ENCODE measurements at regions of chr19 and their contacts with region 1.

Region 1: DNA sequence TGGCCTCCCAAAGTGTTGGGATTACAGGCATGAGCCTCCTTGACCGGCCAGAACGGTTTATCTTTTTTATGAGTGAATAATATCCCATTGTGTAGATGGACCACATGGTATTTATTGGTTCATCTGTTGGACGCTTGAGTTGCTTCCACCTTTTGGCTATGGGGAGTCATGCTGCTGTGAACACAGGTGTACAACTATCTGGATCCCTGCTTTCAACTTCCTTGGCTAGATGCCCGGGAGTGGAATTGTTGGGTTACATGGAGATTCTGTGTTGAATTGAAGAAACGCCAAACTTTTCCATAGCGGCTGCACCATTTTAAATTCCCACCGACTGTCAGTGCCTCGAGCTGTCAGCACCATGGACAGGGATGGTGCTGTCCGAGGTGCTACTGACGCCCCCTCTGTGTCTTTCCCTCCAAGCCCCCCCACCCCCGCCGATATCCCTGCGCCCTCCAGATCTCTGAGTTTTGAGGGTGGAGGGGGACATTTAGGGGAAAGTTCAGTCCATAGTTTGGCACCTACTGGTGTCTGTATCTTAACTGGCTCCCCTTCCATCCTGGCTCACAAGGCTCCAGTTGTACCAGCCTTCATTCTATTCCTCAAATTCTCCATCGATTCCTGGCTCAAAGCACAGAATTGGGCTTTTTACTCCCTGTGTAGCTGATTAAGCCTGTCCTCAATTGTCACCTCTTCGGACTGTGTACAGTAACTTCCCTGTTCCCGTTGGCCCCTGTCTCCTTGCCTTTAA is 27.3 kb downstream of the PNPLA6 start:
- DNase-seq: no peak
- H3K4me3 ChIP-seq: no peak overlapping the region
- H3K27ac ChIP-seq: no peak overlapping the region
- H3K4me1 ChIP-seq: no peaks in the 10 kb centered on the region
- H3K27me3 ChIP-seq: no peaks in the 10 kb centered on the region
- CTCF ChIP-seq: no peak
- POLR2A ChIP-seq: no peak

Region 2: DNA sequence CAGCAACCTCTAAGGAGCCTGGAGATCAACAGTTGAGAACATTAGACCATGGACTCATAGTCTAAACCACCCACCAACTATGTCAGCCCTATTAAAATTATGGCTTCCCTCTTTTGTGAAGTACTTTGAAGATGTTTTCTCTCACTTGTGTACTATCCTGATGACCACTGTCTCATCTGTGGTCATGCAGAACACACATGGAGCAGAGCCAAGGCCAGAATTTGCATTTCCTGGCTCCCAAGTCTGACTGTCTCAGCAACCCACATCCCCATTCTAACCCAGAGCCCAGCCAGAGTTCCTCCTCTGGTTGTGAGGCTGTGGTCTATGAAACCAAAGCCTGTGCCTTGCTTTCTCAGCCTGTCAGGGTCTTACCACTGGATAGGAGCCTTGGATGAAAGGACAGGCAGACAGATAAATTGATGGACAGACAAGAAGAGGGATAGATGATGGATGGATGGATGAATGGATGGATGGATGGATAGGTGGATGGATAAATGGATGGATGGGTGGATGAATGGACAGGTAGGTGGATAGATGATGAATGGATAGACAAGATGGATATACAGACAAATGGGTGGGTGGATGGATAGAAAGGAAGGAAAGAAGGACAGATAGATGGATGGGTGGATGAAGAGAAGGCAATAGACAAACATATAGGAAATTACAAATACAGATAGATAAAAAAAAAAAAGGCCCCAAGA is 457.9 kb before region 1 on chr19:
- CTCF ChIA-PET with region 1: no interaction called
- POLR2A ChIA-PET with region 1: no interaction called
- dilution Hi-C with region 1: no loop called
- intact Hi-C with region 1: loop called (anchors 10 kb)
- DNase-seq: no peak
- H3K4me3 ChIP-seq: no peak overlapping the region
- H3K27ac ChIP-seq: no peak overlapping the region
- H3K4me1 ChIP-seq: no peaks in the 10 kb centered on the region
- H3K27me3 ChIP-seq: no peaks in the 10 kb centered on the region
- CTCF ChIP-seq: no peak
- POLR2A ChIP-seq: no peak

Region 3: GRCh38 chr19:7386308-7386707 is 176.5 kb before region 1 on chr19:
- CTCF ChIA-PET with region 1: no interaction called
- POLR2A ChIA-PET with region 1: no interaction called
- dilution Hi-C with region 1: no loop called
- intact Hi-C with region 1: no loop called
- DNase-seq: no peak
- H3K4me3 ChIP-seq: no peak overlapping the region
- H3K27ac ChIP-seq: no peak overlapping the region
- H3K4me1 ChIP-seq: peaks cover 4% of the 10 kb centered on the region
- H3K27me3 ChIP-seq: no peaks in the 10 kb centered on the region
- CTCF ChIP-seq: no peak
- POLR2A ChIP-seq: no peak

Region 4: GRCh38 chr19:7497292-7497691 is 65.5 kb before region 1 on chr19:
- CTCF ChIA-PET with region 1: no interaction called
- POLR2A ChIA-PET with region 1: no interaction called
- dilution Hi-C with region 1: no loop called
- intact Hi-C with region 1: no loop called
- DNase-seq: no peak
- H3K4me3 ChIP-seq: no peak overlapping the region
- H3K27ac ChIP-seq: no peak overlapping the region
- H3K4me1 ChIP-seq: peaks cover 6% of the 10 kb centered on the region
- H3K27me3 ChIP-seq: peaks cover 0 to 3% of the 10 kb centered on the region in 2 experiments
- CTCF ChIP-seq: peak; percentile 25 to 40
- POLR2A ChIP-seq: no peak

Region 5: GRCh38 chr19:7590261-7590660 is 27.4 kb after region 1 on chr19:
- CTCF ChIA-PET with region 1: interaction called, 14 read pairs
- POLR2A ChIA-PET with region 1: no interaction called
- dilution Hi-C with region 1: no loop called
- intact Hi-C with region 1: no loop called
- DNase-seq: no peak
- H3K4me3 ChIP-seq: no peak overlapping the region
- H3K27ac ChIP-seq: no peak overlapping the region
- H3K4me1 ChIP-seq: no peaks in the 10 kb centered on the region
- H3K27me3 ChIP-seq: peaks cover 5 to 6% of the 10 kb centered on the region in 2 experiments
- CTCF ChIP-seq: no peak
- POLR2A ChIP-seq: no peak

Region 6: GRCh38 chr19:7652061-7652641 is 89.3 kb after region 1 on chr19:
- CTCF ChIA-PET with region 1: interaction called, 12 read pairs
- POLR2A ChIA-PET with region 1: no interaction called
- dilution Hi-C with region 1: no loop called
- intact Hi-C with region 1: no loop called
- DNase-seq: peak; percentile 79
- H3K4me3 ChIP-seq: peak overlapping the region in 1 of 3 experiments; percentile 62
- H3K27ac ChIP-seq: no peak overlapping the region
- H3K4me1 ChIP-seq: peaks cover 14% of the 10 kb centered on the region
- H3K27me3 ChIP-seq: peaks cover 0 to 2% of the 10 kb centered on the region in 2 experiments
- CTCF ChIP-seq: peak; percentile 90 to 99
- POLR2A ChIP-seq: no peak

Region 7: DNA sequence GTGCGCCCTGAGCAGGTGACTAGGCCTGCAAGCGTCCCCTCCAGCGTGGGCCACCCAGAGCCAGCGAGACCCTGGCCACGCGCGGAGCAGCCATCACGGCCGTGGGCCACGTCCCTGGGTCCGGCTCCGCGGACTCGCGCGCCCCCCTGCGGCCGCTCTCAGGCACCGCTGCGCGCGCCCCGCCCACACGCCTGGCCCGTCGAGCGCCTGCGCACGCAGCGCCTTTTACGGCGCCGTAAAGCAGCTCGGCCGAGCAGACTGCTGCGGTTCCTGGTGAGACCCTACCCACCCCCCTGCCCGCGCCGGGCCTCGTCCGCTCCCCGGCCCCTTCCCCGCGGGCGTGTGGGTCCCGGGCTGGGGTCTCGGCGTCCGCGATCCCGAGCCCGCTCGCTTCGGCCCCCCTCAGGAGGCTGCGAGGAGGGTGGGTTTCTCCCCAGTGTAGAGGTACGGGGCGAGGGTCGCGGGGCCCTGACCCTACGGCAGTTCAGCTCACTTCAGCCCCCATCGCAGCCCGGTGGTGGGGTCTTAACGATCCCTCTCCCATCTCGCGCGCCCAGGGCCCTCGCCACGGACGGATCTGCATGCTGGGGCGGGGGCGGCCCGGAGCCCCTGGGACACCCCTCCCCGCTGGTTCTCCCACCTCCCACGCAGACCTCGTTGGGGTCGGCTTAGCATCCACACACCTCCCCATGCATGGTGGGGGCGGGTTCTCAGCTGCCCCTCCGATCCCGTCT is 118.0 kb after region 1 on chr19 and contains the start of gene TRAPPC5:
- CTCF ChIA-PET with region 1: interaction called, 137 read pairs
- POLR2A ChIA-PET with region 1: no interaction called
- dilution Hi-C with region 1: no loop called
- intact Hi-C with region 1: loop called (anchors 1 kb)
- DNase-seq: peak; percentile 83
- H3K4me3 ChIP-seq: peak within 1 kb of the TSS; percentile 72 to 100 (median 79)
- H3K27ac ChIP-seq: peak within 1 kb of the TSS; percentile 65
- H3K4me1 ChIP-seq: peaks cover 7% of the 10 kb centered on the region
- H3K27me3 ChIP-seq: peaks cover 2% of the 10 kb centered on the region in 2 experiments
- CTCF ChIP-seq: peak; percentile 75 to 98
- POLR2A ChIP-seq: peak; percentile 67
- total RNA-seq, gene TRAPPC5: 148 and 172 TPM in 2 replicates

Region 8: GRCh38 chr19:7868676-7869452 is 306.0 kb after region 1 on chr19:
- CTCF ChIA-PET with region 1: interaction called, 16 read pairs
- POLR2A ChIA-PET with region 1: no interaction called
- dilution Hi-C with region 1: no loop called
- intact Hi-C with region 1: no loop called
- DNase-seq: peak; percentile 65
- H3K4me3 ChIP-seq: peak overlapping the region in 1 of 3 experiments; percentile 14
- H3K27ac ChIP-seq: no peak overlapping the region
- H3K4me1 ChIP-seq: peaks cover 7% of the 10 kb centered on the region
- H3K27me3 ChIP-seq: peaks cover 21 to 24% of the 10 kb centered on the region in 2 experiments
- CTCF ChIP-seq: peak; percentile 66 to 84
- POLR2A ChIP-seq: no peak